K562 (cell line): ENCODE measurements at regions of chr1 and their contacts with region 1.

Region 1: DNA sequence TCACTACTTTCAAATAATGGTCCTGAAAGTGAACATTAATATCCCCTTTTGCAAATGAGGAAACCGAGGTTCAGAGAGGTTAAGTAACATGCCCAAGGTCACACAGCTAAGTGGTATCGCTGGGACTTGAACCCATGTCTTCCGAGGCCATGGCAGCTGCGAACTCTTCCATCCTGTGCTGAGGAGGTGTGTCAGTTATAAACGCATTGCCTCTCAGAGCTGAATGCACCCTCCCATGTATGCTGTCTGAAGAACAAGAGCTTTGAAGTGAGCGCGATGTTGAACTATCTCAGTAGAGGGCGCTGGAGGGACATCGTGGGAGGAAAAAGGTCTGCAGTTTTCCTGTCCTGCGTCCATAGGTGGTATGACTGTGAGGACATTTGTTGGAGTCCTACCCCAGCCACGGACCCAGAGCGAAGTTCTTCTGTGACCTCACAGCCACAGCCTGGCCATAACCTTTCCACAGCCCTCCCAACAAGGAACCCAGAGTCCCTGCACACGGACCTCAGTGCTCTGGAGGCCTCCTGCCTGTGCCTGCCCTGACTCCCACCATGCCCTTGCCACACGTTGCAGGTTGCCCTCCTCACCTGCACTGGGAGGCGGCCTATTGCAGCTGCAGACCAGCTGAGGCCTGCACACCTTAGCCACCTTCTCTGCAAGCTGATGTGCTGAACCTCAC is 7.5 kb downstream of the MYOC start:
- DNase-seq: peak; percentile 69 to 91 (median 72)
- ATAC-seq: peak; percentile 97
- H3K4me3 ChIP-seq: no peak overlapping the region
- H3K27ac ChIP-seq: no peak overlapping the region
- H3K4me1 ChIP-seq: peaks cover 0 to 4% of the 10 kb centered on the region in 2 experiments; a peak in 2 of 5 replicates
- H3K27me3 ChIP-seq: peaks cover 4 to 23% of the 10 kb centered on the region in 2 experiments; a peak in 3 of 5 replicates
- CTCF ChIP-seq: peak; percentile 92 to 96 (median 95)
- EP300 ChIP-seq: no peak
- POLR2A ChIP-seq: no peak
- RAD21 ChIP-seq: peak; percentile 74 to 92

Region 2: GRCh38 chr1:171715813-171716251 is 70.9 kb after region 1 on chr1:
- CTCF ChIA-PET with region 1: no interaction called
- POLR2A ChIA-PET with region 1: no interaction called
- in situ Hi-C with region 1: no loop called
- intact Hi-C with region 1: loop called (anchors 2 kb)
- DNase-seq: peak in 1 of 4 experiments; percentile 23
- ATAC-seq: peak; percentile 55
- H3K4me3 ChIP-seq: no peak overlapping the region
- H3K27ac ChIP-seq: no peak overlapping the region
- H3K4me1 ChIP-seq: peaks cover 0 to 4% of the 10 kb centered on the region in 2 experiments; a peak in 2 of 5 replicates
- H3K27me3 ChIP-seq: no peaks in the 10 kb centered on the region
- CTCF ChIP-seq: peak; percentile 30 to 66 (median 45); a peak in 4 of 6 replicates
- EP300 ChIP-seq: no peak
- POLR2A ChIP-seq: no peak
- RAD21 ChIP-seq: peak; percentile 37 to 48; a peak in 3 of 4 replicates

Region 3: GRCh38 chr1:171781176-171781875 is 136.4 kb after region 1 on chr1 and contains the start of gene METTL13:
- CTCF ChIA-PET with region 1: no interaction called
- POLR2A ChIA-PET with region 1: no interaction called
- in situ Hi-C with region 1: no loop called
- intact Hi-C with region 1: loop called (anchors 2 kb)
- DNase-seq: peak; percentile 97 to 100 (median 98)
- ATAC-seq: peak; percentile 98
- H3K4me3 ChIP-seq: peak within 1 kb of the TSS; percentile 76
- H3K27ac ChIP-seq: peak within 1 kb of the TSS; percentile 97
- H3K4me1 ChIP-seq: peaks cover 17 to 28% of the 10 kb centered on the region in 2 experiments; a peak in 4 of 5 replicates
- H3K27me3 ChIP-seq: no peaks in the 10 kb centered on the region
- CTCF ChIP-seq: peak in 1 of 3 experiments; percentile 7; a peak in 1 of 6 replicates
- EP300 ChIP-seq: 0 out of 2 replicates have a peak, but pooled peaks have one; percentile 7
- POLR2A ChIP-seq: peak; percentile 95
- RAD21 ChIP-seq: no peak; a peak in 1 of 4 replicates
- polyA plus RNA-seq, gene METTL13: 18.9 to 23.4 TPM

Region 4: DNA sequence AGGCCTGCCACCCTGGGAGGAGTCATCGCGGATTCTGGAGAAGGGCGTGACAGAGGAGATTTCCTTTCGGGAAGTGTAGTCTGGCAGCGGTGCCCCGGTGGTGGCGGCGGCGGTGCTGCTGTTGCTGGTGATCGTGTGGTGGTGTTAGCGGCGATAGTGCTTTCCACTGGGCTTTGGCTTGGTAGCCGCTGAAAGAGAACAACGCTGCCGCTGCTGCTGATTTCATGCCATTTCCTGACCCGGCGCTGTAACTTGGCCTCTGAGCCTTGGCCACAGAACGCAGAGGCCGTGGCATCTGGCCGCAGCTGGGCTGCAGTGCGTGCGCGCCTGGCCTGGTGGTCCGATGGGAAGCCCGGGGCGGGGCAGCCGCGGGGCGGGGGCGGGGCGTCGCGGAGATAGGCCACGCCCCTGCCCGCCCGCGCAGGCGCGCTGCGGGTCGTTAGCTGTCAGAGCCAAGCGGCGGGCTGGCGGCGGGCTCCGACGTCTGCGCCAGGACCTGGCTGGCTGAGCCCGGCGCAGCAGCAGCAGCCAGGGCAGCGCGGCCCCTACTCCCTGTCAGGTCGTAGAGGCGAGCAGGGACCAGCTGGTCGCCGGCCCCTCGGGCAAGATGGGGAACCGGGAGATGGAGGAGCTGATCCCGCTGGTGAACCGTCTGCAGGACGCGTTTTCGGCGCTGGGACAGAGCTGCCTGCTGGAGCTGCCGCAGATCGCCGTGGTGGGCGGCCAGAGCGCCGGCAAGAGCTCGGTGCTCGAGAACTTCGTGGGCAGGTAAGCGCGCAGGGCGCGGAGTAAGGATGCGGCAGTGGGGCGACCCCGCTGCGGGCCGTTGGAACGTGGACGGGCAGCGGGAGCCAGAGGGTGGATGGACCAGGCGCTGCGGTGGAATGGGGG is 196.4 kb after region 1 on chr1 and contains the start of gene DNM3:
- CTCF ChIA-PET with region 1: no interaction called
- POLR2A ChIA-PET with region 1: no interaction called
- in situ Hi-C with region 1: no loop called
- intact Hi-C with region 1: loop called (anchors 5 kb)
- DNase-seq: peak; percentile 81 to 99 (median 97)
- ATAC-seq: peak; percentile 99
- H3K4me3 ChIP-seq: peak within 1 kb of the TSS; percentile 52
- H3K27ac ChIP-seq: no peak within 1 kb of the TSS
- H3K4me1 ChIP-seq: peaks cover 0 to 15% of the 10 kb centered on the region in 2 experiments; a peak in 3 of 5 replicates
- H3K27me3 ChIP-seq: peaks cover 7 to 10% of the 10 kb centered on the region in 2 experiments; a peak in 4 of 5 replicates
- CTCF ChIP-seq: no peak
- EP300 ChIP-seq: no peak
- POLR2A ChIP-seq: 0 out of 2 replicates have a peak, but pooled peaks have one; percentile 46
- RAD21 ChIP-seq: no peak
- polyA plus RNA-seq, gene DNM3: 0.10 to 0.17 TPM

Region 5: DNA sequence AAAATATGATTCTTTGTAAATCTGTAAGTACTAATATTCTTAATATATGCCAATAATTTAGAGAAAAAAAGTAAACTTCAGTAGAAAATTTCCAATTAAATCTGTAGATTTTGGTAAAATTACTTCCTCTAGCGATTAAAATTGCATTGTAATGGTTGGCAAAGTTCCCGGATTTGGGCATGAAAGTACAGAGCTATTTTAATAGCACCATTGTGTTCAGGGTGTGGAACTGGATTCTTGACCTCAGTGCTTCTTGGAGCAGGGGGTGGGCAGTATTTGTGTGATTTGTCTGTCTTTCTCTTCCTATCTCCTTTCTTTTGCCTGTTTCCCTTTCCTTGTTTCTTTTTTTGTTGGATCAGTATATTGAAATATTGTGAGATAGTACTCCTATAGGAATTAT is 268.4 kb after region 1 on chr1:
- CTCF ChIA-PET with region 1: no interaction called
- POLR2A ChIA-PET with region 1: no interaction called
- in situ Hi-C with region 1: no loop called
- intact Hi-C with region 1: no loop called
- DNase-seq: no peak
- ATAC-seq: no peak
- H3K4me3 ChIP-seq: no peak overlapping the region
- H3K27ac ChIP-seq: no peak overlapping the region
- H3K4me1 ChIP-seq: no peaks in the 10 kb centered on the region
- H3K27me3 ChIP-seq: no peaks in the 10 kb centered on the region; a peak in 1 of 5 replicates
- CTCF ChIP-seq: no peak
- EP300 ChIP-seq: no peak
- POLR2A ChIP-seq: no peak
- RAD21 ChIP-seq: no peak

Region 6: DNA sequence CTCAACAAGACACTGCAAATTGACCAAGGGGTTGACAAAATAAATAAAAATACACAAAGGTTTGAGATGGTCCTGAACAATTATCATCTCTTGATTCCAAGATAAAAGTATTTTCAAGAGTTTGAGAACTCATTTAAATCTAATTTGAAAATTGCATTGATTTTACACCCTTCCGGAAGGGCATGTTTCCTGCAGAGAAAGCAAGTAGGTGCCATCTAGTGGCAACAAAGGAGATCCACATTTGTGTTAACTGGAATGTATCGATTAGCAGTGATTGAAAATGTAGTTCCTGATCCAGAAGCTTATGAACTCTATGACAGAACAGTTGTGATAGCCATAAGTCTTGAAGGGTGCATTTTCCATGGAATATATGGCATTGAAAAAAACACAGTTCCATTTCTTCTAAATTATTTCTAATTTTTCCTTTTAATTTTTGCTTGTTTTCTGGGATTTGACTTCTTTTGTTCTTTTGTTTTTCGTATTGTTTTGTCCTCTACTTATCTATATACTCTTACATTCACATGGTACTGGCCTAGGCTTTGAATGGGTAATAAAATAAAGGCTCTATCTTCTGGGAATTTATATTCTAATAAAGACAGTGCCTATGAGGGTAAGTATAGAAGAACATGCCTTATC is 340.0 kb after region 1 on chr1:
- CTCF ChIA-PET with region 1: interaction called, 6 read pairs
- POLR2A ChIA-PET with region 1: interaction called, 3 read pairs
- in situ Hi-C with region 1: loop called (anchors 5 kb)
- intact Hi-C with region 1: loop called (anchors 1 kb)
- DNase-seq: peak; percentile 23 to 34 (median 28)
- ATAC-seq: peak; percentile 76
- H3K4me3 ChIP-seq: no peak overlapping the region
- H3K27ac ChIP-seq: no peak overlapping the region
- H3K4me1 ChIP-seq: no peaks in the 10 kb centered on the region
- H3K27me3 ChIP-seq: no peaks in the 10 kb centered on the region
- CTCF ChIP-seq: peak; percentile 62 to 78 (median 67); a peak in 5 of 6 replicates
- EP300 ChIP-seq: no peak
- POLR2A ChIP-seq: no peak
- RAD21 ChIP-seq: peak; percentile 69 to 87

Region 7: DNA sequence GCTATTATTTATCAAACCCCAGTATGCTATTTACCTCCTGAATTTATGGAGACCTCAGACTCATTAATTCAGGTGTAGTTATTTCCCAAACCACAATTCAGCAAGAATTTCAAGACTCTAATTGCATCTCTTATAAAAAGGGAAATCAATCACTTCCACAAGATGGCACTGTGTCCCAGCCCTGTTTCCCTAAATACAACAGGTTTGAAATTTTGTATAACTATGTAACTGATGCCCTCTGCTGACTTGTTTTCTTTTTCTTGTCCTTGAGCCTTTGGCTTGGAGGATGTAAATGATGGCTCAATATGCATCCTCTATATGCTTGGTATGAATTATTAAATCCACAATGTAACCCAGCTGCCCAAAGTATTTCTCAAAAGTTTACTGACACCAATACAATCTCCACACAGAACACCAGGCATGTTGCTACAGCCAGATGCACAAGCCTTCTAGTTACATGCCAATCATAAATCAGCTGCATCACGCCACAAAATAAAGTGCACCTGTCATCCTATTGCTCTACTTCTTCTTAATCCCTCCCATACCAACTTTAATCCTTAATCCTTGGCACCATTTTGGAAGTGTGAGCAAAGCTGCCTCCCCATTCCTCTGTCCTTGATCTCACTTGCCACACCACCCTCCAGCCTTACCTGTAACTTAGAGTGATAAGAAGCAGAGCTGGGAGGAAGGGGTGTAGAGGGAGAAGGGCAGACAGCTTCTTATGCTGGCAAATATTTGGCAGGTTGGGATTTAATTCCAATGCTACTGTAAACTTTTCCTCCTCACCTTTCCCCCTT is 784.6 kb after region 1 on chr1:
- CTCF ChIA-PET with region 1: no interaction called
- POLR2A ChIA-PET with region 1: no interaction called
- in situ Hi-C with region 1: no loop called
- intact Hi-C with region 1: loop called (anchors 10 kb)
- DNase-seq: peak; percentile 45 to 80 (median 55)
- ATAC-seq: peak; percentile 82
- H3K4me3 ChIP-seq: no peak overlapping the region
- H3K27ac ChIP-seq: no peak overlapping the region
- H3K4me1 ChIP-seq: peaks cover 0 to 25% of the 10 kb centered on the region in 2 experiments; a peak in 2 of 5 replicates
- H3K27me3 ChIP-seq: no peaks in the 10 kb centered on the region
- CTCF ChIP-seq: peak; percentile 83 to 99 (median 94)
- EP300 ChIP-seq: no peak
- POLR2A ChIP-seq: no peak
- RAD21 ChIP-seq: peak; percentile 93 to 99